Uterus (tissue), 4 donors: ENCODE measurements at regions of chr7 and their contacts with region 1.

Region 1: DNA sequence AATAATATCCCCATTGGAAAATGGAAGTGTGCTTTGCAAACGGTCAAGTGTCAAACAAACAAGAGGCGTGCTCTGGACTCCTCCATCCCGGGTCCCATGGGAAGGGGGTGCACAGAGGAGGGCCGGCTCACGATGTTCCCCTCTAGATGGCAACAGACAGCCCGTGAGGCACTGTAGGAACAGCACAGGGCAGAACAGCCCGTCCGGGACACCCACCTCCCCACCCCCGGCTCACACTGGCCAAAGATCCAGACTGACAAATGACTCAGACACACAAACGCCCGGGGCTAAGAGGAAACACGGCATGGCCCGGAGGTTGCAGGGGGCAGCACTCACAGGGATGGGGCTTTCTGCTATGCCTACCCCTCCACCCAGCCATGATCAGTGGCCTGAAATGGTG is 4.9 kb upstream of the ELN start:
- DNase-seq: peak; percentile 68 to 71
- H3K4me3 ChIP-seq: no peak overlapping the region
- H3K27ac ChIP-seq: peak overlapping the region in 1 of 2 donors; percentile 23
- H3K4me1 ChIP-seq: peaks cover 4 to 18% of the 10 kb centered on the region in 2 donors
- H3K27me3 ChIP-seq: no peaks in the 10 kb centered on the region
- CTCF ChIP-seq: no peak
- POLR2A ChIP-seq: no peak

Region 2: GRCh38 chr7:73799267-73800141 is 223.5 kb before region 1 on chr7:
- intact Hi-C with region 1: no loop called
- DNase-seq: no peak
- H3K4me3 ChIP-seq: no peak overlapping the region
- H3K27ac ChIP-seq: no peak overlapping the region
- H3K4me1 ChIP-seq: no peaks in the 10 kb centered on the region
- H3K27me3 ChIP-seq: no peaks in the 10 kb centered on the region
- CTCF ChIP-seq: no peak
- POLR2A ChIP-seq: no peak

Region 3: GRCh38 chr7:73865738-73866445 is 157.1 kb before region 1 on chr7:
- intact Hi-C with region 1: loop called (anchors 5 kb)
- DNase-seq: peak in 1 of 2 donors; percentile 55
- H3K4me3 ChIP-seq: no peak overlapping the region
- H3K27ac ChIP-seq: no peak overlapping the region
- H3K4me1 ChIP-seq: no peaks in the 10 kb centered on the region
- H3K27me3 ChIP-seq: no peaks in the 10 kb centered on the region
- CTCF ChIP-seq: peak; percentile 53 to 76 (median 69)
- POLR2A ChIP-seq: no peak